ENCODE measurements at regions of chr14 and their contacts with region 1.

Region 1: GRCh38 chr14:67285876-67286452 is 44.7 kb downstream of the PALS1 start:
- DNase-seq: no peak
- ATAC-seq: no peak
- H3K4me3 Mint-ChIP-seq: no peak overlapping the region
- H3K27ac Mint-ChIP-seq: no peak overlapping the region
- H3K4me1 Mint-ChIP-seq: no peaks in the 10 kb centered on the region
- H3K27me3 Mint-ChIP-seq: no peaks in the 10 kb centered on the region

Region 2: DNA sequence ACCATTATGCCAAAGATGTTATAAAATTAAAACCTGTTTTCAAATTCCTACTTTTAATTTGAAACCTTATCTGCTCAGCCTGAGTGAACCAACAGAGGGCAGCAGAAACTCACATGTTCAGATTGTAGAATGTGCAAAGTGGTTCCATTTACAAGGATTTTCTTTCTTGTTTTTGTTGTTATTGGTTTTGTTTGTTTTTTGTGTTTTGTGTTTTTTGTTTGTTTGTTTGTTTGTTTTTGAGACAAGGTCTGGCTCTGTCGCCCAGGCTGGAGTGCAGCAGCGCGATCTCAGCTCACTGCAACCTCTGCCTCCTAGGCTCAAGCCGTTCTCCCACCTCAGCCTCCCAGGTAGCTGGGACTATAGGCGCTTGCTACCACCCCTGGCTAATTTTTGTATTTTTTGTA is 119.5 kb before region 1 on chr14:
- CTCF ChIA-PET with region 1: interaction called, 34 read pairs
- DNase-seq: peak; percentile 48
- ATAC-seq: no peak
- H3K4me3 Mint-ChIP-seq: no peak overlapping the region
- H3K27ac Mint-ChIP-seq: no peak overlapping the region
- H3K4me1 Mint-ChIP-seq: peaks cover 6% of the 10 kb centered on the region
- H3K27me3 Mint-ChIP-seq: no peaks in the 10 kb centered on the region

Region 3: DNA sequence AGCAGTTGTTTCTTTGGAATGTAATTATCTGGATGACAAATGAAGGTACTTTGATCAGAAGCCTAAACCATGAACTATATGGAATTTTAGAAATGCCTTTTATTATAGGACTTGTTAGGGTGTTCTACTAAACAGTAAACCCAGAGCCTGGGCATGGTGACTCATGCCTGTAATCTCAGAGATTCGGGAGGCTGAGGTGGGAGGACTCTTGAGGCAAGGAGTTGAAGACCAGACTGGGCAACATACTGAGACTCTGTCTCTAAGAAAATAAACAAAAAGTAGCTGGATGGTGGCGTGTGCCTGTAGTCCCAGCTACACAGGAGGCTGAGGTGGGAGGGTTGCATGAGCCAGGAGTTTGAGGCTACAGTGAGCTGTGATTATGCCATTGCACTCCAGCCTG is 20.8 kb before region 1 on chr14:
- CTCF ChIA-PET with region 1: interaction called, 10 read pairs
- DNase-seq: no peak
- ATAC-seq: no peak
- H3K4me3 Mint-ChIP-seq: no peak overlapping the region
- H3K27ac Mint-ChIP-seq: no peak overlapping the region
- H3K4me1 Mint-ChIP-seq: peaks cover 10% of the 10 kb centered on the region
- H3K27me3 Mint-ChIP-seq: no peaks in the 10 kb centered on the region

Measured in activated CD8-positive, alpha-beta memory T cell treated with anti-CD3 and anti-CD28 coated beads, Interleukin-2, amount 10 ng/mL, durations not matched to agents 7 days and 5 days (primary cell).